ENCODE measurements at regions of chr20 and their contacts with region 1.

Region 1: DNA sequence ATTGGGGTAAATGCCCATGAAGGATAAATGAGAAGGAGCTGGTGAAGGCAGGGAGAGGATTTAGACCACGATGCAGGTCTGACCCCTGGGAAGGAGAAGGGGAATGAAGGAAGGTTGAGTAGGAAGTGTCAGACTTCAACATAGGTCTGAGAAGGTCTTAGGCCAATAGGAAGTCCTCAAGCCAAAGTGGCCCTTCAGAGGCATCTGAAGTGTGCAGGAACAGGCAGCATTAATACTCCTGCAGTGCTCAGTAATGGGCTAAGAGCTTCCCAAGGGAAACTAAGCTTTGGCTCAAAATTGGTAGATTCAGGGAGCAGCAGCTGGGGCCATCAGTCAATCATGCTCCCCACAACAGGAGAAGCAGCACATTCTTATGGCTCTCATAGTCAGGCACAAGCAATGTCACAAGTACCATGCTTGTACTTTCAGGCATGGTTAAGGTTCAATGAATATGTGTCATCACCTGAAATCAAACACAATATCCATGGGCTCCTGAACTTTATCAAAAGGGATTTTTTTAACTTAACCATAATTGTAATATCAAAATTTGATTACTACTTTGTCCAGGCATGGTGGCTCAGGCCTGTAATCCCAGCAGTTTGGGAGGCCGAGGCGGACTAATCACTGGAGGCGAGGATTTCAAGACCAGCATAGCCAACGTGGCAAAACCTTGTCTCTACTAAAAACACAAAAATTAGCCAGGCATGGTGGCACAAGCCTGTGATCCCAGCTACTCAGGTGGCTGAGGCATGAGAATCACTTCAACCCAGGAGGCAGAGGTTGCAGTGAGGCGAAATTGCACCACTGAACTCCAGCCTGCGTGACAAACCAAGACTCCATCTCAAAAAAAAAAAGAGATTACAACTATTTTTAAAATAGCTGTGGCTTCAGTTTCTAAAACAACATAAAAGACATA is 9.9 kb downstream of the RALGAPA2 start:
- DNase-seq: no peak
- H3K4me3 ChIP-seq: no peak overlapping the region
- H3K27ac ChIP-seq: no peak overlapping the region
- H3K27me3 ChIP-seq: no peaks in the 10 kb centered on the region
- CTCF ChIP-seq: no peak

Region 2: GRCh38 chr20:20603339-20603990 is 99.1 kb before region 1 on chr20:
- intact Hi-C with region 1: loop called in 1 of 2 experiments (anchors 10 kb)
- DNase-seq: no peak
- H3K4me3 ChIP-seq: no peak overlapping the region
- H3K27ac ChIP-seq: no peak overlapping the region
- H3K27me3 ChIP-seq: no peaks in the 10 kb centered on the region
- CTCF ChIP-seq: no peak

Region 3: DNA sequence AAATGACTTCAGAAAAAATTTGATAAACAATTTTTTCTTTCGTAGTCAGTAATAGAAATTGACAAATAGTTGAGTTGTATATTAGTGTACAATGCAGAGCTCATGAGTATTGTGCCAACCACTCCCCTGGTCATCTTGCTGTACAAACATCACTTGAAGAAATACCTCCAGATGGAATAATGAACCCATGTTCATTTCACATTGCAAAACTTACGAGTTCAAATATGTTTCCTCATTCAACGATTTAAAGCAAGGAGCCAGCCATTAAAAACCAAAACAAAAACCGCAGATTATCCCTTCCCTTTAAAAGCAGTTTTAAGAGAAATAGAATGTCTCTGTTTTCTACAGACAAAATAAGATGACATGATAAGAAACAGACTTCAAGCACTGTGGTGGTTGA is 52.6 kb before region 1 on chr20:
- intact Hi-C with region 1: loop called in 1 of 2 experiments (anchors 10 kb)
- DNase-seq: no peak
- H3K4me3 ChIP-seq: no peak overlapping the region
- H3K27ac ChIP-seq: no peak overlapping the region
- H3K27me3 ChIP-seq: no peaks in the 10 kb centered on the region
- CTCF ChIP-seq: no peak

Measured in dorsolateral prefrontal cortex (tissue), 120 donors.